Heart right ventricle (tissue), 16 donors: ENCODE measurements at regions of chr15 and their contacts with region 1.

Region 1: DNA sequence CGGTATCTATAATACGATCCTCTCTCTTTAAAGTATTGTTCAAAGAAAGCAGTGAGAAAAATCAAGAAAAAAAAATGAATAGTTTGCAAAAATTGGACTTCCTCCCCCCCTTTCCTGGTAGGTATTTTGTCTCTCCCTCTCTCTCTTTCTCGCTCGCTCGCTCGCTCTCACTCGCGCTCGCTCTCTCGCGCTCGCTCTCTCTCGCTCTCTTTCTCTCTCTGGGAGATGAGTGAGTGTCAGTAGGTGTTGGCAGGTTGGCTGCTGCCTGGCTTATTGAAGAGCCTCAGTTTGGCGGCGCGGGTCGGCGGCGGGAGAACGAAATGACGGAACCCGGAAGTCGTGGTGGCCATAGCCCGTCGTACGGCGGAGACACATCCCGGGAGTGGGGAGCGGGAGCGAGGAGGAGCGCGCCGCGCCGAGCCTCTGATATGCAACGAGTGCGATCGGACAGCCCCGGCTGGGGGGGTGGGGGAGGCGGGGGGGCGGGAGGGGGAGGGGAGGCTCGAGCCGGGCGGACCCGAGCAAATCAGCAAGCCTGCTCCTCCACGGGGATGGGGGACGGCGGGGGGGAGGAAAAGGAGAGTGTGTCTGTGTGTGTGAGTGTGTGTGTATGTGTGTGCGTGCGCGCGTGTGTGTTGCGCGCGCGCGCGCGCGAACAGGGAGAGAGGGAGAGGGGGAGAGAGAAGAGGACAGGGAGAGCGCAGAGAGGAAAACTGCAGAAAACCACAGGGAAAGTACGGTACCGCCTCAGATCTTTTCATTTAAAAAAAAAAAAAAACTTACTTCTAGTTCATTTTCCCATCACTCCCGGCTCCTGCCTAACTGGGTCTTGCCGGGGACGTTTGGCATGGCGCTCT is at the start of gene MEIS2:
- DNase-seq: peak; percentile 92 to 93
- ATAC-seq: peak; percentile 67 to 84 (median 73)
- H3K4me3 ChIP-seq: peak within 1 kb of the TSS; percentile 55 to 86 (median 75)
- H3K27ac ChIP-seq: peak within 1 kb of the TSS; percentile 91 to 99 (median 96)
- H3K4me1 ChIP-seq: peaks cover 0 to 23% (median 10%) of the 10 kb centered on the region in 9 donors
- H3K27me3 ChIP-seq: peaks cover 0 to 99% (median 20%) of the 10 kb centered on the region in 7 donors
- CTCF ChIP-seq: no peak
- total RNA-seq, gene MEIS2: 34.0 to 64.5 (median 48.5) TPM

Region 2: DNA sequence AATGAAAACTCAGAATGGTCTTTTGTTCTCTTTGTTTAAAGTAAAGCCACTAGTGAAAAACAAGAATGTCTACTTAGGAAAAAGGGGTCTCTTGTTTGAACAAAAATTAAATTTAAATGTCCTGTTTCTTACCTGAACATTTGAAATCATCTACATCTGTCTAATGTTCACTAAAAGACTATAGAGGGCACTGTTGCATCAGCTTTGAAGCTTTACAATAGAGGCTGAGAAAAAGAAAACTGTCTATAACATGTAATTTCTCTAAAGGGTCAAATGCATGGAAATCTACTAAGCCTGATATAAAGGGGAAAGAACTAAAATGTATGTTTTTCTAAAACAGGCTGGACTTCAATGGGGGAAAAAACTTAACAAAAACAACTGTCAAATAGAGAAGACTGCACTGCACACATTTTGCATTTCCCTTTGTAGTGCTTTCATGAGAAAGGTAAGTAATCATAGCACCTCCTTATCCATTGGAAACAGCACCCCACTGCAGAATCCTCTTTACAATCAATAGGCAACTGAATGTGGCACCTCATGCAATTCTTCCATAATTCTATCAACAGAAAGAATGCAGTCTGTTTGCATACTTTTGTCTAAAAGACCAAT is 1580.7 kb before region 1 on chr15:
- intact Hi-C with region 1: loop called in 1 of 10 experiments (anchors 10 kb)
- DNase-seq: peak in 1 of 2 donors; percentile 13
- ATAC-seq: peak in 5 of 8 donors; percentile 66 to 80 (median 72)
- H3K4me3 ChIP-seq: no peak overlapping the region
- H3K27ac ChIP-seq: no peak overlapping the region
- H3K4me1 ChIP-seq: peaks cover 0 to 29% (median 10%) of the 10 kb centered on the region in 9 donors
- H3K27me3 ChIP-seq: no peaks in the 10 kb centered on the region
- CTCF ChIP-seq: peak in 8 of 9 donors; percentile 56 to 86 (median 69)

Region 3: GRCh38 chr15:36579792-36580431 is 520.4 kb before region 1 on chr15:
- intact Hi-C with region 1: loop called in 2 of 10 experiments (anchors 10 kb)
- DNase-seq: peak in 1 of 2 donors; percentile 24
- ATAC-seq: peak; percentile 19 to 67 (median 50)
- H3K4me3 ChIP-seq: peak overlapping the region; percentile 52 to 98 (median 72)
- H3K27ac ChIP-seq: peak overlapping the region; percentile 67 to 97 (median 88)
- H3K4me1 ChIP-seq: peaks cover 0 to 48% (median 17%) of the 10 kb centered on the region in 9 donors
- H3K27me3 ChIP-seq: no peaks in the 10 kb centered on the region
- CTCF ChIP-seq: no peak

Region 4: GRCh38 chr15:36601497-36601932 is 498.8 kb before region 1 on chr15:
- intact Hi-C with region 1: loop called in 3 of 10 experiments (anchors 10 kb)
- DNase-seq: peak in 1 of 2 donors; percentile 77
- ATAC-seq: peak; percentile 87 to 92 (median 90)
- H3K4me3 ChIP-seq: peak overlapping the region in 3 of 10 donors; percentile 6 to 11 (median 10)
- H3K27ac ChIP-seq: peak overlapping the region; percentile 59 to 94 (median 88)
- H3K4me1 ChIP-seq: peaks cover 0 to 61% (median 24%) of the 10 kb centered on the region in 9 donors
- H3K27me3 ChIP-seq: no peaks in the 10 kb centered on the region
- CTCF ChIP-seq: no peak

Region 5: GRCh38 chr15:37015035-37015434 is 85.3 kb before region 1 on chr15:
- intact Hi-C with region 1: loop called in 3 of 10 experiments (anchors 5 to 10 kb)
- DNase-seq: peak in 1 of 2 donors; percentile 21
- ATAC-seq: peak; percentile 36 to 86 (median 79)
- H3K4me3 ChIP-seq: no peak overlapping the region
- H3K27ac ChIP-seq: peak overlapping the region in 9 of 10 donors; percentile 5 to 89 (median 78)
- H3K4me1 ChIP-seq: peaks cover 5 to 70% (median 37%) of the 10 kb centered on the region in 9 donors
- H3K27me3 ChIP-seq: no peaks in the 10 kb centered on the region
- CTCF ChIP-seq: no peak

Region 6: GRCh38 chr15:37059086-37059485 is 41.3 kb before region 1 on chr15:
- intact Hi-C with region 1: loop called in 1 of 10 experiments (anchors 5 kb)
- DNase-seq: no peak
- ATAC-seq: peak in 6 of 8 donors; percentile 26 to 53 (median 44)
- H3K4me3 ChIP-seq: no peak overlapping the region
- H3K27ac ChIP-seq: peak overlapping the region in 8 of 10 donors; percentile 17 to 86 (median 76)
- H3K4me1 ChIP-seq: peaks cover 0 to 54% (median 41%) of the 10 kb centered on the region in 9 donors
- H3K27me3 ChIP-seq: no peaks in the 10 kb centered on the region
- CTCF ChIP-seq: no peak